ENCODE measurements at regions of chr17 and their contacts with region 1.

Region 1: DNA sequence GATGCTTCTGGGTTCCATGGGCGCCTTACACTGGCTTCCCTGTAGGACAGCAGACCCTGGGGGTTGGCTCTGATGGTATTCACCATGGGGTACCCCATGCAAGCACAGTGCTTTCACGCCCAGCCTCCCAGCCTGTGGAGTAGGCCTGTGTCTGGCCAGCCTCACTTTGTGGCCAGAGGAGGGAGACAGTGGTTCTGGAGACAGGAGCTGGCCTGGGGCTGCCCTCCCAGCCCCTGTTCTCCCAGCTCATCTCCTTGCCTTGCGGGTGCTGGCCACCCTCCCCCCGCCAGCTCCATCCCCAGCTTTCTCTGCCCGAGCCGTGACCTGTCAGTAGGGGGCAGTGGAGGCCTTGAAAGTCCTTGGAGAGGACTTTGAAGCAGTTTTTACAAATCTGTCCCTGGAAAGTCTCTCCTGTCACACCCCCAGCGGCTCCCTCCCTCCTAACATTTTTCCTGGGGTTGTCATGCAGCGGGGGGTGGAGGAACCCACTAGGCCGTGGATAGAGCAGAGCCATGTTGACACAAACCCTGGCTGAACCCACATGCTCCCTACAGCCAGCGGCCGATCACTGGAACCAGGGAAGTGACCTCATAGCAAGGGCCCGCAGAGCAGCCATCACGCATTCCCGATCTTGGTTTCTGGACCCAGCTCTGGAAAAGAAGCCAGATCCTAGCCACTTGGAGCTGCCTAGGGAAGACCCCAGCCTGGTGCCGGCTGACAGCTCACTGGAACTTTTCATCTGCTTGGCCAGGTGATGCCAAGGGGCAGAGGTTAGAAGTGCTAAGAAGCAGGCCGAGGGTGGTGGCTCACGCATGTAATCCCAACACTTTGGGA is 289.4 kb downstream of the SEC14L1 start:
- DNase-seq: peak; percentile 92
- ATAC-seq: peak; percentile 86

Region 2: DNA sequence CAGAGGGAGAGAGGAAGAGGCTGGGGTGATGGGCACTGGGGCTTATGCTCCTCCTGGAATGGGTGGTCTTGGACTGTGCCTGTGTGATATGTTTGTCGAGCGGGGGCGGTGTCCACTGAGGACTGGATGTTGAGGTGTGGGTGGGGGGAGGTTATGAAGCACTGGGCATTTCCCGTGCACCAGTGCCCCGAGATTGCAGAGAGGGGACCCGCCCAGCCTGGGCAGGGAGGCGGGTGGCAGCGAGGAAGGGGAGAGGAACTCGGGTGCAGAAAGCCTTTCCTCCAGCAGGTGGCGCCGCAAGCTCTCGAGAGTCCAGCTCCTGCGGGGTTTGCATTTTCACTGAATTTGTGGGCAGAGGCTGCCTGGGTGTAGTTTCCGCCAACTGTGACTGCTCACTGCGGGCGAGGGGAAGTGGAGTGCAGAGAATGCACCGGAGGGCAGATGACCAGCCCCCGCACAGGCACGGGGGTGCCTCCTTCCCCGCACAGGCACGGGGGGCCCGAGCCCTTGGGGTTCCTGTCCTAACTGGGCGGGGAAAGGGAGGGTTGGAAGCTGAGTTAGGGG is 98.8 kb before region 1 on chr17:
- intact Hi-C with region 1: loop called (anchors 2 kb)
- DNase-seq: peak; percentile 96
- ATAC-seq: peak; percentile 85

Region 3: DNA sequence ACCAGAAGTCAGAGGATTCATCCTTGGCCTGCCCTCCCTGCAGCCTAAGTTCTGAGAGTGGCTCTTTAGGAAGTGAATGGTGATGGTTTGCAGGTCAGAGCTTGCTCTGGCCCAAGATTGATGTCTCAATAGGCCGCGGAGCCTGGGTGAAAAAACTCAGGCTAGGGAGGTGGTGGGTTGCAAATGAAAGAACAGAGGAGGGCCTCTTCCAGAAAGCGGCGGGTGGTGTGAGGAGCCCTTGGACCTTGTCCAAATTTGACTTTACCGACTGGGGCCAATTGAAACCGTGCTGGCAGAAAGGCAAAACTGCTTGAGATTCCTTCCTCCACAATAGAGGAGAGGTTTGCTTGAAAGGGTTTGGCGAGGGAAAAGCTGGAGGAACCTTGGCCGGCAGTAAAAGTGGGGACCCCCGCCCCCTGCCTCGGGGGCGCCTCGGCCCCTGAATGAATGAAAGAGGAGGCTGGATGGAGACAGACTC is 41.9 kb after region 1 on chr17:
- intact Hi-C with region 1: loop called (anchors 1 kb)
- DNase-seq: no peak
- ATAC-seq: peak; percentile 64

Region 4: GRCh38 chr17:77494664-77495435 is 64.7 kb after region 1 on chr17:
- intact Hi-C with region 1: loop called (anchors 1 kb)
- DNase-seq: peak; percentile 91
- ATAC-seq: peak; percentile 64